HCT116 (cell line): ENCODE measurements at regions of chr1 and their contacts with region 1.

Region 1: DNA sequence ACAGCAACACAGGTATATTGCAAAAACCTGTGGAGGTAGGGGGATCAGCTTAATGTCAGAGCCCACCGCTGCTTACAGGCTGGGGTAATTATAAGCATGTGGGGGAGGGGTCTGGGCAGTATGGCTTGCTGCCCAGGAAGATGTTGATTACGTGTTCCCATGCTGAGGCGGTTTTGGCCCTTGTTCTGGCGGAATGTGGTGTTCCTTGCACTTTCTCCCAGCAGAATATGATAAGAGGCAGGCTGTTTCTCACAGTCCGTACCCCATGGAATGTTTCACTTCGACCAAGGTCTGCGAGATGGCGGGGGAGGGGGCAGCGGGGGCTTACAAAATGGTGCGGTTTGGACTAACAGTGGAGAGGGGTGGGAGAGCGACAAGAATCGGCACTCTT is 9.8 kb upstream of the HPCAL4 start:
- DNase-seq: no peak
- ATAC-seq: no peak
- H3K4me3 ChIP-seq: no peak overlapping the region
- H3K27ac ChIP-seq: no peak overlapping the region
- H3K4me1 ChIP-seq: peaks cover 0 to 9% of the 10 kb centered on the region in 2 experiments; a peak in 2 of 4 replicates
- H3K27me3 ChIP-seq: peaks cover 12% of the 10 kb centered on the region; the same call in 1 of the 2 replicates
- CTCF ChIP-seq: no peak
- POLR2A ChIP-seq: no peak
- RAD21 ChIP-seq: no peak

Region 2: GRCh38 chr1:39799770-39800470 is 98.9 kb after region 1 on chr1:
- CTCF ChIA-PET with region 1: interaction called, 6 read pairs
- POLR2A ChIA-PET with region 1: no interaction called
- RAD21 ChIA-PET with region 1: interaction called in 1 of 2 experiments, 3 read pairs
- intact Hi-C with region 1: loop called (anchors 1 kb)
- DNase-seq: peak; percentile 39
- ATAC-seq: peak; percentile 89
- H3K4me3 ChIP-seq: peak overlapping the region; percentile 19 to 43
- H3K27ac ChIP-seq: peak overlapping the region; percentile 66; the same call in 1 of the 2 replicates
- H3K4me1 ChIP-seq: peaks cover 9 to 23% of the 10 kb centered on the region in 2 experiments
- H3K27me3 ChIP-seq: no peaks in the 10 kb centered on the region
- CTCF ChIP-seq: peak; percentile 77 to 85 (median 79)
- POLR2A ChIP-seq: no peak
- RAD21 ChIP-seq: peak; percentile 74

Region 3: DNA sequence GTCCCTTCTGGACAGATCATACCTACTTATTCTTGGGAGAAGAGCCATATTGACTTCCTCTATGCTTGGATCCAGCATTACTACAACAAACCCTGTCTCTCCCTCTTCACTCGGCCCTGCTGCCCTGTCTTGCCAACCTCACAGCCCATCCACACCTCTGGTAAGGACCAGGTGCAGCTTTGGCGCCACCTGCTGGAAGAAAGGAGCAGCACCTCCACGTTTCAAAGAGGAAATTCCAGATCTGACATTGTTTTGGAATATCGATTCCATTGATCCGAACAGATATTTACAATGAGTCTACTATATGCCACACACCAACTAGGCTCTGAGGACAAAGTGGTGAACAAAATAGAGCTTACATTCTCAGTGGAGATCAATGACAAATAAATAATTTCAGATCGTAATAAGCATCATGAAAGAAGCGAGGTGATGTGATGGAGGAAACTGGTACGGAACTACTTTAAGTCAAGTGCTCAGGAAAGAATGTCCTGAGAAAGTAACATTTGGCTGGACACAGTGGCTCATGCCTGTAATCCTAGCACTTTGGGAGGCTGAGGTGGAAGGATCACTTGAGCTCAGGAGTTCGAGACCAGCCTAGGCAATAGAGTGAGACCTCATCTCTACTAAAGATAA is 272.6 kb after region 1 on chr1:
- CTCF ChIA-PET with region 1: no interaction called
- POLR2A ChIA-PET with region 1: no interaction called
- RAD21 ChIA-PET with region 1: no interaction called
- intact Hi-C with region 1: loop called (anchors 5 kb)
- DNase-seq: peak; percentile 45
- ATAC-seq: peak; percentile 89
- H3K4me3 ChIP-seq: no peak overlapping the region
- H3K27ac ChIP-seq: no peak overlapping the region
- H3K4me1 ChIP-seq: peaks cover 6 to 9% of the 10 kb centered on the region in 2 experiments; a peak in 3 of 4 replicates
- H3K27me3 ChIP-seq: no peaks in the 10 kb centered on the region
- CTCF ChIP-seq: peak; percentile 96 to 99 (median 98)
- POLR2A ChIP-seq: no peak
- RAD21 ChIP-seq: peak; percentile 98